Aorta (tissue), 5 donors: ENCODE measurements at regions of chr1 and their contacts with region 1.

Region 1: GRCh38 chr1:41045740-41046139 is 24.2 kb upstream of the SLFNL1 start:
- DNase-seq: peak; percentile 75 to 81
- ATAC-seq: peak; percentile 90
- H3K4me3 ChIP-seq: no peak overlapping the region
- H3K27ac ChIP-seq: peak overlapping the region; percentile 62 to 99
- H3K4me1 ChIP-seq: peaks cover 7 to 16% of the 10 kb centered on the region in 2 donors
- H3K27me3 ChIP-seq: no peaks in the 10 kb centered on the region

Region 2: DNA sequence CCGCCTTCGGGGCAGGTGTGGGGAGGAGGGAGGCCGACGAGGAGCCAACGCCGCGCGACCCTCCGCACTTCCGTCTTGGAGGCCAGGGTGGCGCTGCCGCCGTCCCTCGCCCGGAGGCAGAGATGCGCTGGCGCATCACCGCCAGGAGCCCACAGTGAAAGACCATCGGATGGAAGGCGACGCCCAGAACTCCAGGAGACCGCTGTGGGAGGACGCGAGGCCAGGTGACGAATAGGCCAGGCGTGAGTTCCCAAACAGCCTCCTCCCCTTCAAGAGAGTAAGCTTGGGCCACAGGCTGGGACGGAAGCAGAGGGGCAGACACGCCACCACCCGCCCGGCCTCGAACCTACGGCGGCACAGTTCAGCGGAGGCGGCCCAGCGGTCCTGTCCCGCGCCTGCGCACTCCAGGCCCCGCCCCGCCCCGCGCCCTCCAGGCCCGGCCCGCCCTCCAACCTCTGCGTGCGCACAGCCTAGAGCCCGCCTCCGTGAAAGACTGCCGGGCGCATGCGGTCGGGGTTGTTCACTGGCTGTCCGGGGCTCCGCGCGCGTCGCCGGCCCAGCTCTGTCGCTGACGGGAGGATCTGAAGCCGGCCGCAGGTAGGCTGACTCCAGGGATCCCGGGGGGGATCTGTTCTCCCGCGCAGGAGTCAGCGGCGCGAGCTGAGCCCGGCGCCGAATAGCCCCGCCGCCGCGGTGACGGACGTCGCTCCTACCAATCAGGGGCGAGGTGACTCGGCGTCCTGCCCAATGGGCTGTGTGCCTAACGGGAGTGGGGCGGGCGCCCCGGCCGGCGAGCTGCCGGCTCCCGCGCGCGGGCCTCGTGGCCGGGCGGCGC is 66.3 kb before region 1 on chr1 and contains the start of gene CTPS1:
- intact Hi-C with region 1: loop called in 1 of 2 experiments (anchors 5 kb)
- DNase-seq: peak; percentile 97 to 99
- ATAC-seq: peak; percentile 96
- H3K4me3 ChIP-seq: peak within 1 kb of the TSS; percentile 80 to 87
- H3K27ac ChIP-seq: peak within 1 kb of the TSS; percentile 59 to 71
- H3K4me1 ChIP-seq: no peaks in the 10 kb centered on the region
- H3K27me3 ChIP-seq: no peaks in the 10 kb centered on the region
- total RNA-seq, gene CTPS1: 29.9 to 60.6 TPM

Region 3: DNA sequence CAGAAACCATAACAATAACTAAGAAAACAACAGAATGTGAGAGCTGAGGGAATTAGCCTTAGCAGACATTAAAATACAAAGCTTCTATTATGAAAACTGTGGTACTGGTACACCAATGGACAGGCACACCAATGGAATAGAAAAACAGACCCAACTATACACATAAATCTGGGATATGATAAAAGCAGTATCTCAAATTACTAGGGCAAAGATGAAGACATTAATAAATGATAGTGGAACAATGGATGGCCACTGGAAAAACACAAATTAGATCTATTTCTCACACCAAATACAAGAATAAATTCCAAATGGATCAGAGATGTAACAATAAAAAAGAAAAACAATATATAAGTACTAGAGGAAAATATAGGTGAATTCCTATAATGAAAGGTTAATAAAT is 41.2 kb after region 1 on chr1:
- intact Hi-C with region 1: no loop called
- DNase-seq: no peak
- ATAC-seq: no peak
- H3K4me3 ChIP-seq: no peak overlapping the region
- H3K27ac ChIP-seq: no peak overlapping the region
- H3K4me1 ChIP-seq: no peaks in the 10 kb centered on the region
- H3K27me3 ChIP-seq: no peaks in the 10 kb centered on the region

Region 4: DNA sequence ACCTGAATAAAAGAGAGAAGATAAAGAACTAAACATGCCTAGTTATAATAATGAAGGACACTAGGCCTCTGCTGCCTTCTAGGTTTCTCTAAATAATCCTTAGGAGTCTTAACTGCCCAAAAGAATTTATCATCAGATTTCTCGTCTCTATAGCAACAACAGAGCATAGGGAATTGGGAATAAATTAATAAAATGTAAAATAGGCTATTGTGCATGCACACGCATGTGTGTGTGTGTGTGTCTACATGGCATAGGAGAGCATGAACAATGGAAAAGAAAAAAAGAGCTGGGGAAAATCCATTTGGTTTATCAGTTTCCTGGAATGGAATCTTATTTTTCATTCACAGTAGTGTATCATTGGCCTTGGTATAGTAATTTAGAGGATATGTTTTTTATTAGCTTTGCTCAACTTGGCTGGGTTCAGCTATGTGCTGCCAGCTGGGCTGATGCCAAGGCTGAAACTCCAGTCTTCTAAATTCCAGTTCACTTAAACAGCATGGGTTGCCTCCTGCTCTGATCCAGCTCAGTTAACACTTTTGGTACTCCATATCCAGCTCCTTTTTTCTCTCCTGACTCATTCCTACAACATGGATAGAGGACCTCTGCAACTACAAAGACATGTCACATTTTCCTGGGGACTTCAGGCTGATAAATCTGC is 56.3 kb after region 1 on chr1:
- intact Hi-C with region 1: loop called (anchors 5 kb)
- DNase-seq: peak; percentile 92 to 96
- ATAC-seq: peak; percentile 91
- H3K4me3 ChIP-seq: no peak overlapping the region
- H3K27ac ChIP-seq: peak overlapping the region; percentile 76 to 88
- H3K4me1 ChIP-seq: peaks cover 6 to 7% of the 10 kb centered on the region in 2 donors
- H3K27me3 ChIP-seq: no peaks in the 10 kb centered on the region

Region 5: DNA sequence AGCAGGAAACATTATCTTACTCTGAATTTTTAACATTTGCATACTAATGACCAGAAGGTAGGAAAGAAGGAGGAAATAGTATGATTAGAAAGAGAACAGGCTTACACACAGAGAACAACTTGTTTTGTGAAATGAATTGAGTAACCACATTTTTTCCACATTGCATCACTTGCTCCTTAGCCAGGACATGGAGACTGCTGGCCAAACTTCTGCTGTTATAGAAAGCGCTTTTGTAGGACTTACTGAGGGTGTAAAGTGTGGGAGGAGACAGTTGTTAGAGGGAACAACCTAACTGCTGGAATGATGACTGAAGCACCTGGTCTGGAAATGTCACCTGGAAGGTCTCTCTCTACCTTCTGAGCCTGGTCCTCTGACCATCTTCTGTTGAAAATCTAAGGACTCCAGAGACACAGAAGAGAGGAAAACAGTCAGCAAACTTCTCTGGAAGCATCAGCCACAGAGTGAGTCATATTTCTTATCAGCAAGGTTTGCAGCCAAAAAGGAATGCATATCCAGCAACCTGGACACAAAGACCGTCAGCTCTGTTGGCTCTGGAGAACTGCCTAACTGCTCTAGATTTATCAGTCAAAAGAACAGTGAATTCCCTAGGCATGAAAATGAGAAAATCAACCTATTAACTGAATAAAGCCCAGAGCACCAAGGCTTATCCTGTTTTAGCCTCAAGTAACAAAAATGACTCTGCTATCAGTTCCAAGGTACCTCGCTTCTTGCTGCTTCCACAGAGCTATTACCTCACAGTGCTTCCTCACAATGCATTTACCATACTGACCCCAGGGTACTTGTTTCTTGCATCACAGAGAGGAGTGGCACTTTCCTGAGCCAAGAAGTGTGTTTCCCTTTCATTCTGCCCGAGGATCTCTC is 63.8 kb after region 1 on chr1:
- intact Hi-C with region 1: loop called (anchors 2 to 5 kb)
- DNase-seq: no peak
- ATAC-seq: peak; percentile 93
- H3K4me3 ChIP-seq: peak overlapping the region in 1 of 2 donors; percentile 76
- H3K27ac ChIP-seq: peak overlapping the region; percentile 99 to 100
- H3K4me1 ChIP-seq: peaks cover 4 to 11% of the 10 kb centered on the region in 2 donors
- H3K27me3 ChIP-seq: no peaks in the 10 kb centered on the region

Region 6: GRCh38 chr1:41241782-41242341 is 196.1 kb after region 1 on chr1 and contains the start of gene SCMH1:
- intact Hi-C with region 1: loop called (anchors 5 to 10 kb)
- DNase-seq: peak; percentile 61 to 84
- ATAC-seq: peak; percentile 63
- H3K4me3 ChIP-seq: peak within 1 kb of the TSS; percentile 98 to 99
- H3K27ac ChIP-seq: peak within 1 kb of the TSS; percentile 99
- H3K4me1 ChIP-seq: peaks cover 0 to 7% of the 10 kb centered on the region in 2 donors
- H3K27me3 ChIP-seq: no peaks in the 10 kb centered on the region
- total RNA-seq, gene SCMH1: 50.3 to 60.7 TPM